ENCODE measurements at regions of chr14 and their contacts with region 1.

Region 1: GRCh38 chr14:105980224-105980623 is 453.8 kb downstream of the TMEM121 start:
- DNase-seq: no peak
- ATAC-seq: no peak
- H3K4me3 ChIP-seq: no peak overlapping the region
- H3K4me3 Mint-ChIP-seq: no peak overlapping the region
- H3K27ac ChIP-seq: no peak overlapping the region
- H3K27ac Mint-ChIP-seq: no peak overlapping the region
- H3K4me1 ChIP-seq: peaks cover 39% of the 10 kb centered on the region
- H3K4me1 Mint-ChIP-seq: peaks cover 47% of the 10 kb centered on the region
- H3K27me3 ChIP-seq: no peaks in the 10 kb centered on the region
- H3K27me3 Mint-ChIP-seq: no peaks in the 10 kb centered on the region
- CTCF ChIP-seq: no peak

Region 2: DNA sequence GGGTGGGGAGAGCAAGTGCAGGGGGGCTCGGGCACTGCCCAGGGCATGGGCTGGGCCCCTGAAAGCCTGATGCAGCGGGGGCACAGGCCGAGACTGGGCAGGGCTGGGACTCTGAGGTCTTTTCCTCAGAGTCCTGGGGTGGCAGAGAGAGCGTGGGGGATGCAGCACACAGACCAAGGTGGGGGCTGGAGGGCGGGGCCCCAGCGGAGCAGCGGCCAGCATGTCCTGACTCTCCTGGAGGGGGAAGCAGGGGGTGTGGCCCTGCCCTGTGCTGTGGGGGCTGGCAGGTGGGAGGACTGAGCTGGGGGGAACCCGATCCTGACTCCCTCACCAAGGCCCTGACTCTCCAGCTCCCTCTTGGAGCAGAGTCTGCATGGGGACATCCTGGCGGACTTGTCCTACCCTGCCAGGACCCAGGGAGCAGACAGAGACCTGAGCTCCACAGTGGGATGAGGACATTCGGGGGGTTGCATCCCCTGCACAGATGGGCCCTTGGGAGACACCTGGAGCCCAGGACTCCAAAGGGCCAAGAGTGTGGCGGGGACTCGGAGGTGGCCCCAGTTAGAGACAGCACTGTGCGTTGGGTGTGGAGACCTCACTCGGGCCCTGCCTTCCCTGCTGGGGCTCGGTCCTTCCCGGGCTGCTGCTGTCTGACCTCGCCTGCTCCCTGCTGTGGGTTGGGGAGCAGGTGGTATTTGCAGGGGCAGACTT is 127.7 kb before region 1 on chr14:
- CTCF ChIA-PET with region 1: no interaction called
- POLR2A ChIA-PET with region 1: no interaction called
- intact Hi-C with region 1: no loop called
- DNase-seq: peak in 2 of 9 experiments; percentile 2 to 9
- ATAC-seq: no peak
- H3K4me3 ChIP-seq: no peak overlapping the region
- H3K4me3 Mint-ChIP-seq: no peak overlapping the region
- H3K27ac ChIP-seq: no peak overlapping the region
- H3K27ac Mint-ChIP-seq: no peak overlapping the region
- H3K4me1 ChIP-seq: peaks cover 17% of the 10 kb centered on the region
- H3K4me1 Mint-ChIP-seq: peaks cover 16% of the 10 kb centered on the region
- H3K27me3 ChIP-seq: no peaks in the 10 kb centered on the region
- H3K27me3 Mint-ChIP-seq: peaks cover 3% of the 10 kb centered on the region
- CTCF ChIP-seq: no peak

Region 3: DNA sequence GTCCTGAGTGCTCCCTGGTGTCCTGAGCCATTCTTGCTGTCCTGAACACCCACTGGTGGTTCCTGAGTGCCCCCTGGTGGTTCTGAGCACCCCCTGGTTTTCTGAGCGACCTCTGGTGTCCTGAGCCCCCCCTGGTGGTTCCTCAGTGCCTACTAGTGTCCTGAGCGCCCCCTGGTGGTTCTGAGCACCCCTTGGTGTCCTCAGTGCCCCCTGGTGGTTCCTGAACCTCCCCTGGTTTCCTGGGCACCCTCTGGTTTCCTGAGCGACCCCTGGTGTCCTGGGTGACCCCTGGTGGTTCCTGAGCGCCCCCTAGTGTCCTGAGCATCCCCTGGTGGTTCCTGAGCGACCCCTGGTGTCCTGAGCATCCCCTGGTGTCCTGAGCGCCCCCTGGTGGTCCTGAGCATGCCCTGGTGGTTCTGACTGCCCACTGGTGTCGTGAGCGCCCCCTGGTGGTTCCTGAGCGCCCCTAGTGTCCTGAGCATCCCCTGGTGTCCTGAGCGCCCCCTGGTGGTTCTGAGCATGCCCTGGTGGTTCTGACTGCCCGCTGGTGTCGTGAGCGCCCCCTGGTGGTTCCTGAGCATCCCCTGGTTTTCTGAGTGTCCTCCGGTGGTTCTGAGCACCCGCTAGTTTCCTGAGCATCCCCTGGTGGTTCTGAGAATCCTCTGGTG is 19.3 kb after region 1 on chr14:
- CTCF ChIA-PET with region 1: interaction called, 42 read pairs
- POLR2A ChIA-PET with region 1: interaction called, 4 read pairs
- intact Hi-C with region 1: loop called in 1 of 2 experiments (anchors 1 kb)
- DNase-seq: peak in 7 of 9 experiments; percentile 44 to 88 (median 85)
- ATAC-seq: peak; percentile 86
- H3K4me3 ChIP-seq: no peak overlapping the region
- H3K4me3 Mint-ChIP-seq: peak overlapping the region; percentile 3
- H3K27ac ChIP-seq: no peak overlapping the region
- H3K27ac Mint-ChIP-seq: no peak overlapping the region
- H3K4me1 ChIP-seq: peaks cover 28% of the 10 kb centered on the region
- H3K4me1 Mint-ChIP-seq: peaks cover 38% of the 10 kb centered on the region
- H3K27me3 ChIP-seq: no peaks in the 10 kb centered on the region
- H3K27me3 Mint-ChIP-seq: no peaks in the 10 kb centered on the region
- CTCF ChIP-seq: peak; percentile 70

Region 4: DNA sequence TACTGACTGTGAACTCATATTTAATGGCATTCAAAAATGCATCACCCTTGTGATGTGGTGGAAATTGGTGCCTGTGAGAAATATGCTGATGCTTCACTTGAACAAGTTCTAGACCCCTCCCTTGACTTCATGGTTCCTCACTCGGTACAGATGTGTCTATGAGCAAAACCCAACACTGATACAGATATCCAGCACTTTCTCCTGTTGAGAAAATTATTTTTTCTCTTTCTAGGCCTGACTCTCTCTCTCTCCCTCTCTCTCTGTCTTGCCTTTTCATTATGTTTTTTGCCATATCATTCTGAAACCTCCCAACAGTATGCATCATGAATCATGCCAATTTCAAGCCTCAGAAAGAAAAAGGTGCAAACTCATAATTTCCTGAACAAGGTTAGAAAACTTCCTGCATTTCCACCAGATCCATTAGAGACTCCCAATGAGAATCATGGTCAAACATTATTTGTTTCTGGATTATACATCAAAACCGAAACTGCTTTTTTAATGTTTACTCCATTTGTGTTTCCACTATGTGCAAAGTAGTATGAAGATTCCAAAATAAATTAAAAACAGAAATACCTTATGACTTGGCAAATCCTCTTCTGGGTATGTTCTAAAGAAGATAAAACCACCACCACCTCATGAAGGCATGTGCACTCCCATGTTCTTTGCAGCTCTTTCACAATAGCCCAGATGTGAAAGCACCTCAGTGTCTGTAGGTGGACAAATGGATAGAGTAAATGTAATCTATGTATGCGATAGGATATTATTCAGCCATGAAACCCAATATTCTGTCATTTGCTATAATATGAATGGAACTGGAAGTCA is 89.8 kb after region 1 on chr14:
- CTCF ChIA-PET with region 1: no interaction called
- POLR2A ChIA-PET with region 1: no interaction called
- intact Hi-C with region 1: no loop called
- DNase-seq: no peak
- ATAC-seq: no peak
- H3K4me3 ChIP-seq: no peak overlapping the region
- H3K4me3 Mint-ChIP-seq: no peak overlapping the region
- H3K27ac ChIP-seq: no peak overlapping the region
- H3K27ac Mint-ChIP-seq: no peak overlapping the region
- H3K4me1 ChIP-seq: no peaks in the 10 kb centered on the region
- H3K4me1 Mint-ChIP-seq: no peaks in the 10 kb centered on the region
- H3K27me3 ChIP-seq: no peaks in the 10 kb centered on the region
- H3K27me3 Mint-ChIP-seq: peaks cover 13% of the 10 kb centered on the region
- CTCF ChIP-seq: no peak

Measured in CD8-positive, alpha-beta T cell (primary cell).